ENCODE measurements at regions of chr2 and their contacts with region 1.

Region 1: GRCh38 chr2:85826990-85827878 is 61.6 kb downstream of the ST3GAL5 start:
- DNase-seq: peak; percentile 89
- ATAC-seq: peak; percentile 99
- H3K4me3 Mint-ChIP-seq: peak overlapping the region; percentile 12
- H3K27ac Mint-ChIP-seq: peak overlapping the region; percentile 27
- H3K4me1 Mint-ChIP-seq: peaks cover 35% of the 10 kb centered on the region
- H3K27me3 Mint-ChIP-seq: peaks cover 17% of the 10 kb centered on the region

Region 2: GRCh38 chr2:85838181-85838580 is 10.9 kb after region 1 on chr2:
- CTCF ChIA-PET with region 1: interaction called, 13 read pairs
- POLR2A ChIA-PET with region 1: interaction called, 3 read pairs
- DNase-seq: peak; percentile 17
- ATAC-seq: no peak
- H3K4me3 Mint-ChIP-seq: no peak overlapping the region
- H3K27ac Mint-ChIP-seq: peak overlapping the region; percentile 56
- H3K4me1 Mint-ChIP-seq: peaks cover 24% of the 10 kb centered on the region
- H3K27me3 Mint-ChIP-seq: peaks cover 3% of the 10 kb centered on the region

Region 3: GRCh38 chr2:85858841-85859240 is 31.6 kb after region 1 on chr2:
- CTCF ChIA-PET with region 1: interaction called, 80 read pairs
- POLR2A ChIA-PET with region 1: interaction called, 6 read pairs
- DNase-seq: no peak
- ATAC-seq: no peak
- H3K4me3 Mint-ChIP-seq: no peak overlapping the region
- H3K27ac Mint-ChIP-seq: no peak overlapping the region
- H3K4me1 Mint-ChIP-seq: peaks cover 58% of the 10 kb centered on the region
- H3K27me3 Mint-ChIP-seq: no peaks in the 10 kb centered on the region

Region 4: GRCh38 chr2:85878719-85879385 is 51.6 kb after region 1 on chr2:
- CTCF ChIA-PET with region 1: interaction called, 256 read pairs
- POLR2A ChIA-PET with region 1: no interaction called
- DNase-seq: no peak
- ATAC-seq: peak; percentile 52
- H3K4me3 Mint-ChIP-seq: no peak overlapping the region
- H3K27ac Mint-ChIP-seq: peak overlapping the region; percentile 22
- H3K4me1 Mint-ChIP-seq: peaks cover 62% of the 10 kb centered on the region
- H3K27me3 Mint-ChIP-seq: no peaks in the 10 kb centered on the region

Region 5: GRCh38 chr2:86035883-86036668 is 208.8 kb after region 1 on chr2:
- CTCF ChIA-PET with region 1: interaction called, 161 read pairs
- POLR2A ChIA-PET with region 1: interaction called, 3 read pairs
- DNase-seq: peak; percentile 81
- ATAC-seq: peak; percentile 48
- H3K4me3 Mint-ChIP-seq: peak overlapping the region; percentile 61
- H3K27ac Mint-ChIP-seq: peak overlapping the region; percentile 95
- H3K4me1 Mint-ChIP-seq: peaks cover 85% of the 10 kb centered on the region
- H3K27me3 Mint-ChIP-seq: no peaks in the 10 kb centered on the region

Region 6: GRCh38 chr2:86079981-86080911 is 253.0 kb after region 1 on chr2:
- CTCF ChIA-PET with region 1: interaction called, 442 read pairs
- POLR2A ChIA-PET with region 1: interaction called, 11 read pairs
- DNase-seq: peak; percentile 90
- ATAC-seq: peak; percentile 88
- H3K4me3 Mint-ChIP-seq: no peak overlapping the region
- H3K27ac Mint-ChIP-seq: peak overlapping the region; percentile 88
- H3K4me1 Mint-ChIP-seq: peaks cover 41% of the 10 kb centered on the region
- H3K27me3 Mint-ChIP-seq: no peaks in the 10 kb centered on the region

Region 7: GRCh38 chr2:86105252-86105968 is 278.2 kb after region 1 on chr2 and contains the start of gene POLR1A:
- CTCF ChIA-PET with region 1: interaction called, 12 read pairs
- POLR2A ChIA-PET with region 1: interaction called, 10 read pairs
- DNase-seq: peak; percentile 91
- ATAC-seq: peak; percentile 85
- H3K4me3 Mint-ChIP-seq: peak within 1 kb of the TSS; percentile 92
- H3K27ac Mint-ChIP-seq: peak within 1 kb of the TSS; percentile 99
- H3K4me1 Mint-ChIP-seq: peaks cover 46% of the 10 kb centered on the region
- H3K27me3 Mint-ChIP-seq: no peaks in the 10 kb centered on the region
- total RNA-seq, gene POLR1A: 40.8 to 41.5 TPM